CD8-positive, alpha-beta T cell (primary cell): ENCODE measurements at regions of chrX and their contacts with region 1.

Region 1: GRCh38 chrX:73943693-73944562 is 360.1 kb upstream of the ZCCHC13 start:
- DNase-seq: peak; percentile 68 to 94 (median 84)
- ATAC-seq: peak; percentile 99
- H3K4me3 ChIP-seq: peak overlapping the region; percentile 88 to 98
- H3K4me3 Mint-ChIP-seq: peak overlapping the region; percentile 93
- H3K27ac ChIP-seq: peak overlapping the region; percentile 79 to 98
- H3K27ac Mint-ChIP-seq: peak overlapping the region; percentile 98
- H3K4me1 ChIP-seq: peaks cover 12% of the 10 kb centered on the region
- H3K4me1 Mint-ChIP-seq: peaks cover 27% of the 10 kb centered on the region
- H3K27me3 ChIP-seq: no peaks in the 10 kb centered on the region
- H3K27me3 Mint-ChIP-seq: no peaks in the 10 kb centered on the region
- CTCF ChIP-seq: no peak

Region 2: DNA sequence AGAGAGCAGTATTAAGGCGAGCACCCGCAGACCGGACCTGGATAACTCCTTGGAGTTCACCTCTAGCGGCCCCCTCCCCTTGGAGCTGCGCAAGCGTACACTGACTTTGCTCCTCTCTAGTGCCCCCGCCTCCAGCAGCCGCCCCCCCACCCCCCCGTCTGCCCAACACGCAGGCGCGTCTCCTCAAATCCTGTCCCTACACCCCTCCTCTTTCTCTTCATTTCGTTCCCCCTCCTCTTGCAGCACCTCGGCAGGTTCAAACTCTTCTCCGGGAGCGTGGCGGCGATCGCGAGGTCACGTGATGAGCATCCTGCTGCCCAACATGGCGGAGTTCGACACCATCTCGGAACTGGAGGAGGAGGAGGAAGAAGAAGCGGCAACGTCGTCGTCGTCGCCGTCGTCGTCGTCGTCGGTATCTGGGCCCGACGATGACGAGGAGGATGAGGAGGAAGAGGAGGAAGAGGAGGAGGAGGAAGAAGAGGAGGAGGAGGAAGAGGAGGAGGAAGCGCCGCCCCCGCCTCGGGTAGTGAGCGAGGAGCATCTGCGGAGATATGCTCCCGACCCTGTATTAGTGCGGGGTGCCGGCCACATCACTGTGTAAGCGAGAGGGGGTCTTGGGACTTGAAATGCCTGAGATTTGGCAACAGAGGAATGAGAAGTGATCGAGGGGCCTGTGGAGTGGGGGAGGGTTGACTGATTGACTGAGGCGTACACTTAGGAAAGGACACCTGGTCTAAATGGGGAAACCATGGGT is 380.8 kb before region 1 on chrX and contains the start of gene CHIC1:
- CTCF ChIA-PET with region 1: no interaction called
- POLR2A ChIA-PET with region 1: no interaction called
- intact Hi-C with region 1: loop called in 1 of 2 experiments (anchors 5 kb)
- DNase-seq: peak; percentile 46 to 88 (median 67)
- ATAC-seq: peak; percentile 69
- H3K4me3 ChIP-seq: peak within 1 kb of the TSS; percentile 71 to 74
- H3K4me3 Mint-ChIP-seq: peak within 1 kb of the TSS; percentile 97
- H3K27ac ChIP-seq: peak within 1 kb of the TSS; percentile 78 to 93
- H3K27ac Mint-ChIP-seq: peak within 1 kb of the TSS; percentile 99
- H3K4me1 ChIP-seq: peaks cover 9% of the 10 kb centered on the region
- H3K4me1 Mint-ChIP-seq: peaks cover 32% of the 10 kb centered on the region
- H3K27me3 ChIP-seq: no peaks in the 10 kb centered on the region
- H3K27me3 Mint-ChIP-seq: no peaks in the 10 kb centered on the region
- CTCF ChIP-seq: no peak
- total RNA-seq, gene CHIC1: 5.0 to 5.4 TPM

Region 3: DNA sequence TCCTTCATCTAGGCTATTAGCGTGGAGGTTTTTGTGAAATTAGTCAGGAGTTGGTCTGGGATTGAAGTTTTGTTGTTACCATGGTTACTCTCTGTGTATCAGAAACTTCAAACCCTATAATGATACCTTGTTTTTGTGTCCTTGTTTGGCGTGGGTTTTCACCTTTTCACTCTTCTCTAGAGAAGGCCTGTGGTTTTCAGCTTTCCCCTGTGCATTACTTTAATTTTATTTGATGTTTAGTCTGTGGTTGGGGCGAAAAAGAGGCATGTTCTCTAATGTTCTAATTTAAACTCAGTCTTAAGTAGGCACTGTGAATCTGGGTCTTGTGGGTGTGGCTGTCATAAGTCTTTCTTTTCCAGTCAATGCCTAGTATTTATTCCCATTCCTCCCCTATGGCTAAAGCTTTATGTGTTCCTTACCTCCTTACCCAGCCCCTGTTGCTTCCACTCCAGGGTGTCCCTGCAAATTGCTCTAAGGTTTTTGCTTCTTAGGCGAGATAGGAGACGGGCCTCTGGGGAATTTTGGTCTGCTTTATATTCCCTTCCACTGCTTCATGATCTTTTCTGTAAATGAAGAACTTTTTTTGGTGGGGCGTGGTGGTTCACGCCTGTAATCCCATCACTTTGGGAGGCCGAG is 33.7 kb after region 1 on chrX:
- CTCF ChIA-PET with region 1: no interaction called
- POLR2A ChIA-PET with region 1: interaction called, 7 read pairs
- intact Hi-C with region 1: loop called (anchors 2 to 5 kb)
- DNase-seq: peak in 4 of 9 experiments; percentile 21 to 81 (median 52)
- ATAC-seq: peak; percentile 84
- H3K4me3 ChIP-seq: no peak overlapping the region
- H3K4me3 Mint-ChIP-seq: peak overlapping the region; percentile 44
- H3K27ac ChIP-seq: peak overlapping the region; percentile 60 to 66
- H3K27ac Mint-ChIP-seq: peak overlapping the region; percentile 91
- H3K4me1 ChIP-seq: peaks cover 25% of the 10 kb centered on the region
- H3K4me1 Mint-ChIP-seq: peaks cover 60% of the 10 kb centered on the region
- H3K27me3 ChIP-seq: no peaks in the 10 kb centered on the region
- H3K27me3 Mint-ChIP-seq: no peaks in the 10 kb centered on the region
- CTCF ChIP-seq: no peak

Region 4: GRCh38 chrX:74015379-74016019 is 71.6 kb after region 1 on chrX:
- CTCF ChIA-PET with region 1: no interaction called
- POLR2A ChIA-PET with region 1: no interaction called
- intact Hi-C with region 1: no loop called
- DNase-seq: peak; percentile 12 to 80 (median 59)
- ATAC-seq: no peak
- H3K4me3 ChIP-seq: no peak overlapping the region
- H3K4me3 Mint-ChIP-seq: no peak overlapping the region
- H3K27ac ChIP-seq: no peak overlapping the region
- H3K27ac Mint-ChIP-seq: no peak overlapping the region
- H3K4me1 ChIP-seq: no peaks in the 10 kb centered on the region
- H3K4me1 Mint-ChIP-seq: peaks cover 4% of the 10 kb centered on the region
- H3K27me3 ChIP-seq: no peaks in the 10 kb centered on the region
- H3K27me3 Mint-ChIP-seq: no peaks in the 10 kb centered on the region
- CTCF ChIP-seq: peak; percentile 75

Region 5: DNA sequence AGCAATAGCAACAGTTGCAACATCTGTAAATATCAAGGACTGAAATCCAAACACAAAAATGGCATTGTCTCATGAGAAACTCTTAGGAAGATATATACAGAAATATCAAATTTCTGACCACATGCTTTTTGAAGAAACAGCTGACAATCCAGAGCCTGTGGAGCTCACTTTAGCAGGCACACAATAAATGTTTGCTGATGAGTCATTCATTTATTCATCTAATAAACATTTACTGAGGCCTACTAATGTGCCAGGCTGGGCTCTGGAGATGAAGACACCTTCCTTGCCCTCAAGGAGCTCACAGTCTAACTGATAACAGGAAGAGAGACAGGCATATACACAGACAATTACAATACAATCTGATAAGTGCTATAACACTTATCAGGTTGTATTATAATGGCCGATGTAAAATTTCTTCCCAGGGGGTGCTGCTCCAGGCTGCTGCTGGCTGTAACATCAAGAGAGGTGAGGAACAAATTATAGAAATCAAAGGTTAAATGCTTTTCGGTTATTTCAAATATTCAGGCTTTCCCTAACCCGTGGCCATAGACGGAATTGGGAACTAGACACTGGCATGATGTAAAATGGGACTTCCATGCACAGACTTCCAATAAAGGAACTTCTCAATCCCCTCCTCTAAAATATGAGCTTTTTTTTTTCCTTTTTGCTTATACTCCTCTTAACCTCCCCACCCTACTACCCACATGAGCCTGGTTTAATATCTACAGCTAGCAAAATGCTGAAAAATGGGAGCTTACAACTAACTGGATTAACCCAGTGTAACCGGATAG is 343.2 kb after region 1 on chrX:
- CTCF ChIA-PET with region 1: no interaction called
- POLR2A ChIA-PET with region 1: interaction called, 4 read pairs
- intact Hi-C with region 1: loop called (anchors 5 to 10 kb)
- DNase-seq: no peak
- ATAC-seq: no peak
- H3K4me3 ChIP-seq: no peak overlapping the region
- H3K4me3 Mint-ChIP-seq: no peak overlapping the region
- H3K27ac ChIP-seq: no peak overlapping the region
- H3K27ac Mint-ChIP-seq: no peak overlapping the region
- H3K4me1 ChIP-seq: peaks cover 7% of the 10 kb centered on the region
- H3K4me1 Mint-ChIP-seq: peaks cover 38% of the 10 kb centered on the region
- H3K27me3 ChIP-seq: no peaks in the 10 kb centered on the region
- H3K27me3 Mint-ChIP-seq: no peaks in the 10 kb centered on the region
- CTCF ChIP-seq: no peak

Region 6: DNA sequence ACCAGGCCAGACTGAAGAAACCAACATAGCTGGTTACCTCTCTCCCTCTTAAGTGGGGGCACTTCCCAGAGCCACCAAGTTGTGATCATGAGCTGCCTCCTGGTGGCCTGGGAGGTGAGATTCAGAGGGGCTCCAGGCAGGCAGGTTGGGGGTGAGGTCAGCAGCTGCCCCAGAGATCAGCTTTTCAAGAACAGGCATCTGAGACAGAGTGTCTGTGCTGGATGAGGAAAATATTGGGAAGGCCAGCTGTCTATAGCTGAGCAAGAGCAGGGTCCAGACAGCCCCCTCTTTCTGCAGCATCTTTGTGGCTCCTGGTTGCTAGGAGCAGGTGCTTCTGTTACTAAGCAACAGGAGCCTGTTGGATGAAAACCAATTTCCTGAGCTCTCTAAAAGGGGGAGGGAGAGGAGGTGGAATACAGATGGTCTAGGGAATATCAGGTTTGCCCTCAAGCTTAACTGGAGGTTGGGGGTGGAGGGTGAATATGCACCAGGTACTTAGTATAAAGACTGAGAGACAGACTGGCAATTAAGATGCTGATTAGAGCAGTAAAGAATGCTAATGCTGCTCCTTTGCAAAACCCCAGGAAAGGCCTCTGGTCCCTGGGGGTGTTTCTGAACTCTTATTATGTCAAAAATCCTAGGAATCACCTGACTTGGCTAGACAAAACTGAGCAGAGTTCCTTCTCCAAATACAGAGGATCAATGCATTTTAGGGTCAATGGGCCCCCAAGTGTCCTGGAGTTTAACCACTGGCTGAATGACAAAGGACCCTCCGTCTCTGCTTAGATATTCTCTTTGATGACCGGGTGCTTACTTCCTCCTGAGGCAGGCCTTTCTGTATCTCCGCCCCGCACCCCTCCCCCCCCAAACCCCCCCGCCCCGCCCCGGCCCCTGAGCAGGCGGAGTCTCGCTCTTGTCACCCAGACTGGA is 381.5 kb after region 1 on chrX:
- CTCF ChIA-PET with region 1: no interaction called
- POLR2A ChIA-PET with region 1: no interaction called
- intact Hi-C with region 1: no loop called
- DNase-seq: peak in 2 of 9 experiments; percentile 11 to 28
- ATAC-seq: no peak
- H3K4me3 ChIP-seq: no peak overlapping the region
- H3K4me3 Mint-ChIP-seq: no peak overlapping the region
- H3K27ac ChIP-seq: no peak overlapping the region
- H3K27ac Mint-ChIP-seq: no peak overlapping the region
- H3K4me1 ChIP-seq: no peaks in the 10 kb centered on the region
- H3K4me1 Mint-ChIP-seq: no peaks in the 10 kb centered on the region
- H3K27me3 ChIP-seq: no peaks in the 10 kb centered on the region
- H3K27me3 Mint-ChIP-seq: no peaks in the 10 kb centered on the region
- CTCF ChIP-seq: no peak

Region 7: DNA sequence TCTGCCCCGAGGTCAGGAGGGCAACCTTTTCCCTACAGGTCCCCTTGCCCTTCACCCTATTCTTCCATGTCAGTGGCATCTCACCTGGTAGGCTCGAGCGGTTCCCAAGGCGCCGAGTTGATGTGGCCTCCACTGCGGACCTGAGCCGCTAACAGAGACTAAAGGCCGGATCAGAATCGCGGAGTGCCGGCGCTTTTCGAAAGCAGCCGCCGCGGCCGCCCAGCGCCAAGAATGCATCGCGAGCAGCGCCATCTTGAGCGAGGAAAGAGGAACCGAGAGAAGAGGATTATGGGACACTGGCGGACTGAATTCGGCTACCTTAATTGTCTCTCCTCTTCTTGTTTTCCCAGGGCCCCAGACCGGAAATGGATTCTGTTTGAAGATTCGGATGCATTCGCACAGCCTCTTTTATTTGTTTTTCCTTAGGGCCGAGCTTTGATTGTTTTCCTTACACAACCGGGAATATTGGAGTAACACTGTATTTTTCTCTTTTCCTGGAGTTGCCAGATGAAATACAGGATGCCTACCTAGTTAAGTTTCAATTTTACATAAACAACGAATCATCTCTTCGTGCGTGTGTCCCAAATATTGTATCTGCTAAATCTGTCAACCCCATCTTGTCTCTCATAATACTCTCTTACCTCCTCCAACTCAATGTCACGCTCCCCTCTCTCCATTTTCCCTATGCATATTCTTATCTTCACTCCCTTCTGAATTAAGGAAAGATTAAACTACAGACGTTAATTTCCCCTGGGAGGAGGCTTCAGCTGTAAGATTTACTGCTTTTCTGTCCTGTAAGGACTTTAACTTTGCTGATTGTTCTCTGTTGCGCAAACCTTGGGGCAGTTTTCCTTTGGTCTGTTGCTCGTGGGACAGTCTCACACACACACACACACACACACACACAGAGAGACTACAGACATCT is 1212.4 kb after region 1 on chrX and contains the start of gene ABCB7:
- CTCF ChIA-PET with region 1: no interaction called
- POLR2A ChIA-PET with region 1: no interaction called
- intact Hi-C with region 1: loop called (anchors 5 kb)
- DNase-seq: peak; percentile 19 to 83 (median 63)
- ATAC-seq: peak; percentile 91
- H3K4me3 ChIP-seq: peak within 1 kb of the TSS; percentile 87 to 96
- H3K4me3 Mint-ChIP-seq: peak within 1 kb of the TSS; percentile 94
- H3K27ac ChIP-seq: peak within 1 kb of the TSS; percentile 77 to 80
- H3K27ac Mint-ChIP-seq: peak within 1 kb of the TSS; percentile 98
- H3K4me1 ChIP-seq: peaks cover 17% of the 10 kb centered on the region
- H3K4me1 Mint-ChIP-seq: peaks cover 49% of the 10 kb centered on the region
- H3K27me3 ChIP-seq: no peaks in the 10 kb centered on the region
- H3K27me3 Mint-ChIP-seq: no peaks in the 10 kb centered on the region
- CTCF ChIP-seq: no peak
- total RNA-seq, gene ABCB7: 16.6 to 17.3 TPM